Prostate gland (tissue), 2 donors: ENCODE measurements at regions of chr9 and their contacts with region 1.

Region 1: GRCh38 chr9:68704814-68705530 is at the start of gene PIP5K1B:
- DNase-seq: peak; percentile 65
- H3K4me3 ChIP-seq: peak within 1 kb of the TSS; percentile 46 to 59
- H3K27ac ChIP-seq: peak within 1 kb of the TSS; percentile 60 to 68
- H3K4me1 ChIP-seq: no peaks in the 10 kb centered on the region
- H3K27me3 ChIP-seq: no peaks in the 10 kb centered on the region
- CTCF ChIP-seq: peak in 2 of 4 experiments; percentile 25 to 32
- POLR2A ChIP-seq: peak; percentile 52
- total RNA-seq, gene PIP5K1B: 1.6 to 38.3 TPM

Region 2: GRCh38 chr9:68669218-68669617 is 35.8 kb before region 1 on chr9:
- intact Hi-C with region 1: no loop called
- DNase-seq: no peak
- H3K4me3 ChIP-seq: no peak overlapping the region
- H3K27ac ChIP-seq: no peak overlapping the region
- H3K4me1 ChIP-seq: no peaks in the 10 kb centered on the region
- H3K27me3 ChIP-seq: no peaks in the 10 kb centered on the region
- CTCF ChIP-seq: no peak
- POLR2A ChIP-seq: no peak

Region 3: DNA sequence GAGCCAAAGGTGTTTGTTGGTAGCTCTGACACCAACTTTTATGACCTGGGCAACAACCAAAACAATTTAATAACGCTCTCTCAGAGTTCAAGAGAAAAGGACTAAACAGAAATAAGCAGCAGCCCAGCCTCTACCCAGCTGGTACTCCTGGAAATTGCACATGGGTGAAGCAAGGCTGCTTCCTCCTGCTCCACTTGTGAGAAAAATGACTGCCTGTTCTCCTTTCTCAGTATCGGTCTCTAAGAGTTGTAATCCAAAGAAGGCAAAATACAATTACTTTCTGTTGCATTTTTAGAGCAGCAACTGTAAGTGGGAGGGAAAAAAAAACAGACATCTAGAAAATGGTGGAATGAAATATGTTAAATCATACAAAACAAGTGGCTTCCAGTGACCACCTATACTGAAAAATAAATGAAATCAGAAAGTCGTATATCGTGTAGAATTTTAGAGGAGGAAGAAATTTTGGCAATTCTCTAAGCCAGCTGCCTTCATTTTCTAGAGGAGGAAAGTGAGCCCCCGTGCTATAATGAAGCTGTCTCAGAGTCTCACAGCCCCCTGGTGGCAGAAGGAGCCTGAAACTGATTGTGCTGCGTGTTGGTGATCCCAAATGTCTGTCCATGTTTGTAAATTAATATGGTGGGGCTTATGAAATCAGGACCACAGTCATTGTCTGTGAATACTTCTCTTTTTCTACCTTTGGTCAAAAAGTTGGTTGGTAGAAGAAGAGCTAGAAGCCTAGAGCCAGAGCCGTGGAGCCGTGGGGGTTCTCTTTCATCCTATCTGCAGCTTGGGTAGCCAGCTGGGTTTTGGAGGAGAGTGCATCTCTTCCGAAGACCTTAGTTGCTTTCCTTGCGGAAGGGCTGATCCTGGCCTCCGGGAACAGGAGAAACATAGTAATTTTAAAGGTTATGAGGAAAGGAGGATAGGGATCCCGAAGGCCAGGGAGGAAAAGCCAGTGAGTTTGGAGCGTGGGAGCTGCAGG is 139.9 kb after region 1 on chr9:
- intact Hi-C with region 1: loop called (anchors 10 kb)
- DNase-seq: no peak
- H3K4me3 ChIP-seq: no peak overlapping the region
- H3K27ac ChIP-seq: no peak overlapping the region
- H3K4me1 ChIP-seq: no peaks in the 10 kb centered on the region
- H3K27me3 ChIP-seq: no peaks in the 10 kb centered on the region
- CTCF ChIP-seq: peak in 3 of 4 experiments; percentile 12 to 26 (median 22)
- POLR2A ChIP-seq: no peak

Region 4: GRCh38 chr9:68949271-68950000 is 244.5 kb after region 1 on chr9:
- intact Hi-C with region 1: loop called (anchors 10 kb)
- DNase-seq: peak; percentile 41
- H3K4me3 ChIP-seq: no peak overlapping the region
- H3K27ac ChIP-seq: no peak overlapping the region
- H3K4me1 ChIP-seq: no peaks in the 10 kb centered on the region
- H3K27me3 ChIP-seq: no peaks in the 10 kb centered on the region
- CTCF ChIP-seq: peak in 3 of 4 experiments; percentile 22 to 58 (median 49)
- POLR2A ChIP-seq: no peak